ENCODE measurements at regions of chr19 and their contacts with region 1.

Region 1: DNA sequence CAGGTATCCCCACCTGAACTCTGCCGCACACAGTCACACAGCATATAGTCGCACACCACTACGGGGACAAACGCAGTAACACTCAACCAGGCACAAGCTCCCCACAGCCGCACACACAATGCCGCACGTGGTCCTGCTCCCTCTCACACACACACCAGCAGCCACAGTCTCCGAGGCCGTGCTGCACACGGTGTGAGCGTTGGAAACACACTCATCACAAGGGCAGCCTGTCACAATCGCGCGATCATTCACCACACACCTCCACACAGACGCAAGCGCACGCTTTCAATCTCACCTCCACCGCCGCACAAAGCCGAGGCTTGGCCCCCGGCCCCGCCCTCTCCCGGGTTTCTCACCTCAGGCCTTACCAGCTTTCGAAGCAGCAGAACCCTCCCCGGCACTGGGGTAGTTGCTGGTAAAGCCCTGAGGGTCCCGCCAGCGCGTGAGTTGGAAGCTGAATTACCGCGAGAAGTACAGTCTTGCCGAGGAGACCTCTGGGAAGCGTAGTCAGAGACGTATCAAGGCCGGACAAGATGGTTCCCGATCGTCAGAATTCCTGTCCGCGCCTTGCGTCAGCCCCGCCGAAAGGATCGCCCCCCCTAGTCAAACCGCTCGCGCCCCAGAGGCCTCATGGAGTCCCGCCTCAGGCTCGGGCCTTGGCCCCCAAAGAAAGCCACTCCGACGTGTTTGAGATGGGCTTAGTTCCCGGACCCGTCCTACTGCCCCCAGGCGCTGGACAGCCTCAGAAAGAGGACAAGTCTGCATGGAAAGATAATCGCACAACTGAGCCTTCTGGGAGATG is at the start of gene ZNF566:
- DNase-seq: peak; percentile 94

Region 2: GRCh38 chr19:36214386-36215275 is 274.7 kb before region 1 on chr19 and contains the starts of genes ZNF146 and ZNF565:
- CTCF ChIA-PET with region 1: no interaction called
- POLR2A ChIA-PET with region 1: interaction called, 12 read pairs
- DNase-seq: peak; percentile 95

Region 3: GRCh38 chr19:36378625-36379509 is 110.5 kb before region 1 on chr19 and contains the start of gene ZFP14:
- CTCF ChIA-PET with region 1: no interaction called
- POLR2A ChIA-PET with region 1: interaction called, 18 read pairs
- DNase-seq: peak; percentile 98

Region 4: DNA sequence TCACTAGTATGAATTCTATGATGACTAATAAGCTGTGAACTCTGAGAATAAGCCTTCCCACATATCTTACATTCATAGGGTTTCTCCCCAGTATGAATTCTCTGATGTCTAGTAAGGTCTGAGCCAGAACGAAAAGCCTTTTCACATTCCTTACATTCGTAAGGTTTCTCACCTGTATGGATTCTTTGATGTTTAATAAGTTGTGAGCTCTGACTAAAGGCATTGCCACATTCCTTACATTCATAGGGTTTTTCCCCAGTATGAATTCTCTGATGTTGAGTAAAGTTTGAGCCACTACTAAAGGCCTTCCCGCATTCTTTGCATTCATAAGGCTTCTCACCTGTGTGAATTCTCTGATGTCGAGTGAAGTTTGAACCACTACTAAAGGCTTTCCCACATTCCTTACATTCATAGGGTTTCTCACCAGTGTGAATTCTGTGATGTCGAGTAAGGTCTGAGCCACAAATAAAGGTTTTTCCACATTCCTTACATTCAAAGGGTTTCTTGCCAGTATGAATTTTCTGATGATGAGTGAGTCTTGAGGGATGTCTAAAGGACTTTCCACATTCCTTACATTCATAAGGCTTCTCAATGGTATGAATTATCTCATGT is 40.2 kb before region 1 on chr19:
- CTCF ChIA-PET with region 1: no interaction called
- POLR2A ChIA-PET with region 1: no interaction called
- DNase-seq: no peak

Region 5: DNA sequence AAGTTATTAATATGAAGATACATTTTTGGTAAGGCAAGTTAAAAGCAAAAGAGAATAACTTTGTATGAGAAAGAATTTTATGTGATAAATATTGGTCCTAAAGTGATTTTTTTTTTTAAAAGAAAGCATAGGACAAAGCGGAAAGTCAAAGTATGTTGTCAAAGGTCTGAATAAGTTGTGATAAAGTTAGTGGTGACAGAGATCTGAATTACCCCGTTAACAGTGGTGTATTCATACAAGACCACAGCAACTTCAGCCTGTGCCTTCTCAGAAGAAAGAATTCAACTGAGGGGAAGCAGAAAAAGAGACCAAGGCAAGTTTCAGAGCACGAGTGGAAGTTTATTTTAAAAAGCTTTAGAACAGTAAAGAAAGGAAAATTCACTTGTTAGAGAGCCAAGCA is 19.0 kb after region 1 on chr19:
- CTCF ChIA-PET with region 1: no interaction called
- POLR2A ChIA-PET with region 1: no interaction called
- DNase-seq: no peak

Region 6: DNA sequence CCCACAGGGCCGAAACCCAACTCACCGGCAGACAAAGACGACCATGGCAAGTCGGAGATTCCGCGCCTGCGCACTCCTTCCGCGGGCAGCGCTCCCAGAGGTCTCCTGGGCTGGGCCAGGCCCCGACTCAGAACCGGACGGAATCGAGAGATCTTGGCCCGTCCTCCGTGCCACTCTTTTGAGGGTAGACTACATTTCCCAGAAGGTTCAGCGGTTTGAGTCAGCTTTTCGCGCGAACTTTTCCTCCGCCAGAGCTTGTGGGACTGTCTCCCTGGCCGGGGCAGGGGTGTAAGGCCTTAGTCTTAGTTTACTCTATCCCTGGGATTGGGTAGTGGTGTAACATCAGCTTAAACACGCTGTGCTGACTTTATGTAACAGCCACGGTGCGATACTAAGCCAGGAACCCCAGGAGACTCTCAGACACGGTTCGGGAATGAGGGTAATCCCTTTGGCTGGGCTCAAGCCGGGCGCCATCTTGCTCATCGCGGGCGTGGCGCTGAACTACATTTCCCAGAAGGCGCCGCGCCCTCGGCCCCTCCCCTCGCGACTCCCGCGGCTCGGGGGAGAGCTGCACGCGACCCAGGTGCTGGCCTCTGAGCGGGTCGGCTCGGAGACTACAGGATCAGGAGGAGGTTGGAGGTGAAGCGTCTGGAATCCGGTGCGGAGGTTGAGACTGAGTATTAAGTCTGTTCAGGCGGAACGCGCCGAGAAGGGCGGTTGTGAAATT is 39.0 kb after region 1 on chr19 and contains the start of gene ZNF260:
- CTCF ChIA-PET with region 1: no interaction called
- POLR2A ChIA-PET with region 1: interaction called, 20 read pairs
- DNase-seq: peak; percentile 88

Region 7: DNA sequence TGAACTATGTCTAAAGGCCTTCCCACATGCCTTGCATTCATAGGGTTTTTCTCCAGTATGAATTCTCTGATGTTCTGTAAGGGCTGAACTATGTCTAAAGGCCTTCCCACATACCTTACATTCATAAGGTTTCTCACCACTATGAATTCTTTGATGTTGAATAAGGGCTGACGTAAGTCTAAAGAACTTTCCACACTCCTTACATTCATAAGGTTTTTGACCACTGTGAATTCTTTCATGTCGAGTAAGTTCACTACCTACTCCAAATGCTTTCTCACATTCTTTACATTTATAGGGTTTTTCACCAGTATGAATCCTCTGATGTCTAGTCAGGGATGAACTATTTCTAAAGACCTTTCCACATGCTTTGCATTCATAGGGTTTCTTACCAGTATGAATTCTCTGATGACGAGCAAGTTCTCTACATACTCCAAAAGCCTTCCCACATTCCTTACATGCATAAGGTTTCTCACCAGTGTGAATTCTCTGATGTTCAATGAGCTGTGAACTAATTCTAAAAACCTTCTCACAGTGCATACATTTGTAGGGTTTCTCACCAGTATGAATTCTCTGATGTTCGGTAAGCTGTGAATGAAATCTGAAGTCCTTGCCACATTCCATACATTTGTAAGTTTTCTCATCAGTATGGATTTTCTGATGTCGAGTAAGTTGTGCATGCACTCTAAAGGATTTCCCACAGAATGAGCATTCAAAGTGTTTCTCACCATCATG is 57.8 kb after region 1 on chr19:
- CTCF ChIA-PET with region 1: no interaction called
- POLR2A ChIA-PET with region 1: no interaction called
- DNase-seq: no peak

Region 8: GRCh38 chr19:36605101-36605876 is 116.0 kb after region 1 on chr19 and contains the start of gene ZNF382:
- CTCF ChIA-PET with region 1: no interaction called
- POLR2A ChIA-PET with region 1: interaction called, 11 read pairs
- DNase-seq: peak; percentile 86